OCI-LY7 (cell line): ENCODE measurements at regions of chr3 and their contacts with region 1.

Region 1: DNA sequence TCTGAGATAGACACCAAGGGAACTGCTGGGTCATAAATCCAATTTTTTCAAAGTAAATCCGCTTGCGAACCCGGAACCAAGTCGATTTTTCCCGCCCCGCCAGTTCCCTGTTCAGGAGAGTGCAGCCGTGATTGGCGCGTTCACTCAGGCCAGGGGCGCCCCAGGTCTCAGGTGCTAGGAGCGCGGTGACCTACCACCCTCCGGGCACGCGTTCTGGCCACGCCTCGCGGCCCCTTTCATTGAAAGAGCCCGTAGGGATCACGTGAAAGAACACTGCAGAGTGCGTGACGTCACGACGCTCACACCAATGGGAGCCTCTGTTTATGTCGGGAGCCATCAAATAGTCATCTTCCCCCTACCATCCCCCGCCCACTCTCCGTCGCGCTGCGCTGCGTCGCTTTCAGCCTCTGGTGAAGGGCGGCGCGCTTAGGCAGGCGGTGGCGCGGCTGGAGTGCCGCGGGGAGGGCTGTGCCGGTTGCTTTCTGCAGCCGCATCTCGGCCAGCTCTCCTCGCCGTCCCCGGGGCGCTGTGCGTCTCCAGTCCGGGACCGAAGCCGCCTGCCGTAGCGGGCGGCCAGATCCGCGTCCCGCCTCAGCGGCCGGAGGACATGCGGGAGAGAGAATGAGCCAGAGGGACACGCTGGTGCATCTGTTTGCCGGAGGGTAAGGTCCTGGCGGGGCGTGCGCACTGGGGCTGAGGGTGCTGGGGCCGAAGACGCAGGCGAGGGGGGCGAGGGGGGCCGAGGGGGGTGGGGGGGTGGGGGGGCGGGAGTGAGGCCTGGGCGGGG is at the start of gene SLC25A36:
- DNase-seq: peak; percentile 99
- H3K4me3 ChIP-seq: peak within 1 kb of the TSS; percentile 82
- H3K27ac ChIP-seq: peak within 1 kb of the TSS; percentile 64
- H3K4me1 ChIP-seq: peaks cover 30% of the 10 kb centered on the region
- CTCF ChIP-seq: no peak
- total RNA-seq, gene SLC25A36: 71.8 and 91.3 TPM in 2 replicates

Region 2: DNA sequence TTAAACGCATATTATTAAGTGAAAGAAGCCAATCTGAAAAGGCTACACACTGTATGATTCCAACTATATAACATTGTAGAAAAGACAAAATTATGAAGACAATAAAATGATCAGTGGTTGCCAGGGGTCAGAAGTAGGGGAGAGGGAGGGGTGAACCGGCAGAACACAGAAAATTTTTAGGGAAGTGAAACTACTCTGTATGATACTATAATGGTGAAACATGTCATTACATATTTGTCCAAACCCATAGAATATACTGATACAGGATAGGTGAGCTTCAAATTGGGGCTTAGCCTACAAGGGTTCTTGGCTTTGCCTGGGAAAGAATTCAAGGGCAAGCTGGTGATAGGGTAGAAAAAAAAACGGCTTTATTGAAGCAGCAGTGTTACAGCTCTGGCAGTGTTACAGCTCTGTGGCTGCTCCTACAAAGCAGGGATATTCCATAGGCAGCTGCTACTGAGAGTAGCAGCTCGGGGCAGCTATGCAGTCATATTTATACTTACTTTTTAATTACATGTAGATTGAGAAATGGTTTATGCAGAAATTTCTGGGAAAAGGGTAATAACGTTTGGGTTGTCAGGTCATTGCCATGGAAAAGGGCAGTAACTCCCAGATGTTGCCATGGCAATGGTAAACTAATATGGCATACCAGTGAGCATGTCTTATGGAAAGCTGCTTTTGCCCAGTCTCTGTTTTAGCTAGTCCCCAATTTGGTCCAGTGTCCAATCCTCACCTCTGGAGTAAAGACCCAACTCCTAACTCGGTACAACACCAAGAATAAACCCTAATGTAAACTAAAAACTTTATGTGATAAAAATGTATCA is 125.0 kb before region 1 on chr3:
- CTCF ChIA-PET with region 1: no interaction called
- POLR2A ChIA-PET with region 1: no interaction called
- intact Hi-C with region 1: no loop called
- DNase-seq: peak; percentile 78
- H3K4me3 ChIP-seq: peak overlapping the region; percentile 2
- H3K27ac ChIP-seq: peak overlapping the region; percentile 39
- H3K4me1 ChIP-seq: peaks cover 24% of the 10 kb centered on the region
- CTCF ChIP-seq: no peak

Region 3: GRCh38 chr3:140953028-140953960 is 11.7 kb after region 1 on chr3:
- CTCF ChIA-PET with region 1: no interaction called
- POLR2A ChIA-PET with region 1: interaction called, 11 read pairs
- intact Hi-C with region 1: no loop called
- DNase-seq: no peak
- H3K4me3 ChIP-seq: no peak overlapping the region
- H3K27ac ChIP-seq: no peak overlapping the region
- H3K4me1 ChIP-seq: no peaks in the 10 kb centered on the region
- CTCF ChIP-seq: no peak

Region 4: DNA sequence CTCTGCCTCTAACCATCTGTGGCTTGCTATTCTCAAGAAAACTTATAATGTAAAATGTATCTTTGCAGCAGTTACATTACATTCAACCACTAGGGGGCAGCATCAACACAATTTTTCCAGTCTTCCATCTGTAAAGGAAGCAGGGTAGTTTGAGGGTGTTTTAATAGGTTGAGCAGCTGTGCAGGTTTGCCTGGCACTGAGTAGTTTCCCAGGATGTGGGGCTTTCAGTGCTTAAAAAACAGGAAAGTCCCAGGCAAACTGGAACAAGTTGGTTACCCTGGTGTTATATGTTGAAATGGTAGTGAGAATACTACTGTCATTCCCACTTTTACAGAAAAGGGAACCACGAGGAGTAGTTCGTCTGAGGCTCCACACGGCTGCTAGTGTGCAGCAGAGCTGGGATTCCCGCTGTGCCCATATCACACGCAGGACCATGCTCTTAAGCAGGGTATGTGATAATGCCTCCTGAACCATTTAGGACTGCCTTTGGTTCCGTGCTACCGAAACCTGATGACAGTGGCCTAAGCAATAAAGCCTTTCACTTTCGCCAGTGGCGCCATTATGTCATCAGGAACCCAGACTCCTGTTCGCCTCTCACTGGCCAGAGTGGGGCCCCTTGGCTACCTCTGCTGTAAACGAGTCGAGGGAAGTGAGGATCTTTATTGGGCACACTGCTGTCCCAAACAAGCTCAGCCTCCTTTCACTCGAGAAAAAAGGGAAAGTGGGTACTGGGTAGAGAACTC is 362.0 kb after region 1 on chr3:
- CTCF ChIA-PET with region 1: no interaction called
- POLR2A ChIA-PET with region 1: no interaction called
- intact Hi-C with region 1: no loop called
- DNase-seq: peak; percentile 81
- H3K4me3 ChIP-seq: no peak overlapping the region
- H3K27ac ChIP-seq: no peak overlapping the region
- H3K4me1 ChIP-seq: no peaks in the 10 kb centered on the region
- CTCF ChIP-seq: peak; percentile 92